Cardiac septum (tissue), 1 donor: ENCODE measurements at regions of chr3 and their contacts with region 1.

Region 1: DNA sequence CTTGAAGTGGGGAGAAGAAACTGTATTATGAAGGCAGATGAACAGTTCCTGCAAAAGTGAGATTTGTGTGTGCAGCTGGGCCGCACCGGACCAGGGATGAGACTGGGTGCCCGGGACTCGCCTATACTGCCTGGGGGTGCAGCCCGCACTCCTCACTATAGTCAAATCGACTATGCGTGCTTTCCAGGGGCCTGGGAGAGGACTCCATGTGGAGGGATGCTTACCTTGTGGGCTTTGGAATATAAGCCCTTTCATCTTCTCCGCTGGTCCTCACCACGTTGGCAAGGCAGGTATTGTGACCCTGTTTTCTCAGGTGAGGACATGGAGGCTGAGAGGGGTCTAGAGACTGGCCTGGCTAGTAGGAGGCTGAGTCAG is 33.0 kb upstream of the APOD start:
- DNase-seq: peak; percentile 62

Region 2: DNA sequence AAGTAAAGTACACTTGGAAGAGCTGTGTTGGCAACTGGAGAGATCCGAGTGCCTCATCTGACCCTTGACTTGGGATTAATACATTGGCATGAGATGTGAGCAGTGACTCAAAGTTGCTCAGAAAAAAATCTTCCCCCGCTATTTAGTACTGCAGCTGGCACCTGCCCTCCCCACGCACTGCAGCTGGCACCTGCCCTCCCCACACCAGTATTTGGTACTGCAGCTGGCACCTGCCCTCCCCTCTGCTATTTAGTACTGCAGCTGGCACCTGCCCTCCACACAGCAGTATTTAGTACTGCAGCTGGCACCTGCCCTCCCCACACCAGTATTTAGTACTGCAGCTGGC is 100.1 kb after region 1 on chr3:
- intact Hi-C with region 1: loop called (anchors 2 kb)
- DNase-seq: no peak

Region 3: DNA sequence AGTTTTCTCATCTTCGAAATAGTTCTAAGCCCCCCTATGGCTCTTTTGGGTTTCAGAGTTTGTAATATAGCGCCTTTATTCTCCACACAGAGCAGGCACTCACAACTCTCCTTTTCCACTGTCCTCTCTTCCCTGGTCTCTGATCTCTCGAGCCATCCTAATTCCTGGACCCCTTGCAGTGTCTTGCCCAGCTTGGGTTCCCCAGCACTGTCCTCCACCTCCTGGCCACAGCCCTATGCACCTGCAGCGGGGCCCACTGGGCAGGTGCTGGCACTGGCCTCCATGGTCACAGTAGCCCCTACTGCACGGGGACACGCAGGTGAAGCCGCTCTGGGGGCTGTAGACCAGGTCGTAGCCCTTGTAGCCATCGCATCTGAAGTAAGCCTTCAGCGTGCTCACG is 132.0 kb after region 1 on chr3:
- intact Hi-C with region 1: loop called (anchors 10 kb)
- DNase-seq: no peak